Cardiac septum (tissue), 1 donor: ENCODE measurements at regions of chr5 and their contacts with region 1.

Region 1: DNA sequence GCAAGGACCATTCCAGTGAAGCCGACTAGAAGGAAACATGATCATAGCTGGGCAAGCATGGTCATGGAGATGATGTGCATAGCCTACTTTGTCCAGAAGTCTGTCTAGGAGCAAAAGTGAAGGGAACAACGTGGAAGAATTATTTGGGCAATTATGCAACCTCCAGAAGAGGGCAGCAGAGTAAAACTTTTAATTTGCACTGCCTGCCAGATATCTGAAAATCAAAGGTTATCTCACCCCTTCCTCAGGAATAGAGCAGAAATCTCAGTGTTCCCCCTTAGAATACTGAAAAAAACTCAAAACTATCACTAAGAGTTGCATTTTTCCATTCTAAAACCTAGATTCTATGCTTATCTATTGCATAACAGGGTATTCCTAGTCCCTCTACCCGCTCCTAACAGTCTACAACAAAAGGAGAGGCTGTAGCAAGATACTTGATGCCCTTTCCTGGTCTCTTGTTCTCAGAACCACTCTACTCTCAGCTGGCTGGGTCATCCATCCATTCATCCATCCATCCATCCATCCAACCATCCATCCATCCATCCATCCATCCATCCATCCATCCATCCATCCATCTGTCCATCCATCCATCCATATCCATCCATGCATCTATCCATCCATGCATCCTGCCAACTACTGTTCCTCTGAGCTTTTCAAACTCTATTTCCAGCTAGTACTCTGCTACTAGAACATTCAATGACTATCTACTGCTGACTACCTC is 8.4 kb upstream of the SETD9 start:
- DNase-seq: no peak

Region 2: DNA sequence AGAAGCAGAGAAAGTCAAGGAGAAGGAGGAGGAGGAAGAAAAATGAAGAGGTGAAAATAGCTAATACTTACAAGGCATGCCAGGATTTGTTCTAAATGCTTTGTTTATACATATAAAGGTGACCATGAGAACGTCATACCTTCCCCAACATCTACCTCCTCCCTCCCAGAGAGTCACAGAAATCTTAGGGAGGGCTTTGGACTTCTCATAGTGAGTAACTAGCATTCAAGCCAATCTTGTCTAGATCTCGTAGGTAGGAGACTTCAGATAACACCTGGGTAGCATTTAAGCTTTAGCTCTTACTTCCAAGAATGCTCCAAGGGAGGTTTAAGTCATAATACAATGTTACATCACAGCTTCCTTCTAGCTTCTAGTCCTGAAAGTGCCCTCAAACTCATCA is 236.4 kb after region 1 on chr5:
- intact Hi-C with region 1: loop called (anchors 1 kb)
- DNase-seq: no peak

Region 3: GRCh38 chr5:57221049-57221568 is 320.1 kb after region 1 on chr5:
- intact Hi-C with region 1: loop called (anchors 2 kb)
- DNase-seq: no peak